Vagina (tissue), 2 donors: ENCODE measurements at regions of chr15 and their contacts with region 1.

Region 1: DNA sequence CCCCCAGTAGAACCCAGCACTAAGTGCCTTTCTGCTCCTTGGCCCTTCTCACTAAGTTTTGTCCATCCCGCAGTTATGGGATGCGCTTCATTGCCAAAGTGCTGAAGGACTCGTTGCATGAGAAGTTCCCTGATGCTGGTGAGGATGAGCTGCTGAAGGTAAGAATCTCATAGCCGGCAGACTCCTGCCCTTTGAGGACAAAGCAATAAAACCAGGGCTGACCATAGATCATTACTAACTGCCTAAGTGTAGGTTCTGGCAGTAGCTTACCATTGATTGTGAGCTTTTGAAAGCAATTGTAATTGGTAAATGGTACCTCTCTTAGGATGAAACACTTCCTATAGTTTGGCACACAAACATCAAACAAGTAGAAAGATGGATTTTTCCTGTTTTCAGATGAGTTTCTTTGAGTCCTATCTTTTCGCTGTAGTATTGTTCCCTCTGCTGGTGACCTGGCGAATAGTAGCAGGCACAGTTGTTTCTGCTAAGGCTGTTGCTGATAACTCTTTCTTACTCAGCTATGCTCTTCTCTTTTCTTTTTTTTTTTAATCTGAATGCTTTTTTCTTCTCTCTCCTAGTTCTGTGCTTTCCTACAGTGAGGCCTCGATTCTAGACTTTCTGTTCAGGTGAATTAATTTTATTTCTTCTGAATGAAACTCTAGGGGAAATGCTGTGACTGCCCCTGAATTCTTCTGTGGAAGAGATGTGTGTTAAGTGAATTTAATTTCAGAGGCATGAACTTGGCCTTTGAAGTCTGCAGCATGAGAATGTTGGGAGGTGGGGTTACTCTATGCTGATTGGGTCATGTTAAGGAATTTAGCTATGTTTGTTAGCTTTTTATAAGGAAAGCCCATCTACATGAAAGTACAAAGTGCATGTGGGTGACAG is 47.4 kb upstream of the CRTC3 start:
- DNase-seq: no peak
- H3K4me3 ChIP-seq: no peak overlapping the region
- H3K27ac ChIP-seq: peak overlapping the region; percentile 52
- H3K4me1 ChIP-seq: peaks cover 11% of the 10 kb centered on the region
- H3K27me3 ChIP-seq: no peaks in the 10 kb centered on the region
- CTCF ChIP-seq: peak; percentile 21 to 82 (median 64)
- POLR2A ChIP-seq: no peak

Region 2: GRCh38 chr15:90320061-90320884 is 162.1 kb before region 1 on chr15:
- intact Hi-C with region 1: loop called (anchors 5 kb)
- DNase-seq: peak; percentile 88 to 95
- H3K4me3 ChIP-seq: peak overlapping the region; percentile 9 to 25
- H3K27ac ChIP-seq: peak overlapping the region; percentile 67
- H3K4me1 ChIP-seq: peaks cover 33% of the 10 kb centered on the region
- H3K27me3 ChIP-seq: no peaks in the 10 kb centered on the region
- CTCF ChIP-seq: peak; percentile 99
- POLR2A ChIP-seq: no peak

Region 3: DNA sequence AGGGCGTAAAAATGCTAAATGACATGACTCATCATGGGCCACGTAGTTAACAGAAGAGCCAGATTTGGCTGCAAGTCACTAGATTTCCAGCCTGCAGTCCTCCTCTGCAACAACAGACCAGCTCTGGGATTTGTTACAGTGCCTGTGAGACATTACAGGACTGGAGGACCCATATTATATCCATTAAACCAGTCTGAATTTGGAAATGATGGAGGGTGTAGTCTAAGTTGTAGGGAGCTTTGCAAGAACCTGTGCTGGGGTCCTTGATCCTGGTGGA is 119.5 kb before region 1 on chr15:
- intact Hi-C with region 1: loop called (anchors 10 kb)
- DNase-seq: no peak
- H3K4me3 ChIP-seq: no peak overlapping the region
- H3K27ac ChIP-seq: peak overlapping the region; percentile 78
- H3K4me1 ChIP-seq: peaks cover 28% of the 10 kb centered on the region
- H3K27me3 ChIP-seq: no peaks in the 10 kb centered on the region
- CTCF ChIP-seq: no peak
- POLR2A ChIP-seq: no peak

Region 4: DNA sequence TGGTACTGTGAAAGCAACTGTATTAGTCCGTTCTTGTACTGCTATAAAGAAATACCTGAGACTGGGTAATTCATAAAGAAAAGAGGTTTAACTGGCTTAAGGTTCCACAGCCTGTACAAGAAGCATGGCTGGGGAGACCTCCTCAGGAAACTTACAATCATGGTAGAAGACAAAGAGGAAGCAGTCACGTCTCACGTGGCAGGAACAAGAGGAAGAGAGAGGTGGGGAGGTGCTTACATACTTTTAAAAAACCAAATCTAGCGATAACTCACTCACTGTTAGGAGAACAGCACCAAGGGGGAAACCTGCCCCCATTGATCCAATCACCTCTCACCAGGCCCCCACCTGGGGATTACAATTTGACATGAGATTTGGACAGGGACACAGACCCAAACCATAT is 45.4 kb before region 1 on chr15:
- intact Hi-C with region 1: no loop called
- DNase-seq: no peak
- H3K4me3 ChIP-seq: no peak overlapping the region
- H3K27ac ChIP-seq: no peak overlapping the region
- H3K4me1 ChIP-seq: peaks cover 24% of the 10 kb centered on the region
- H3K27me3 ChIP-seq: no peaks in the 10 kb centered on the region
- CTCF ChIP-seq: no peak
- POLR2A ChIP-seq: no peak